ENCODE measurements at regions of chr9 and their contacts with region 1.

Region 1: GRCh38 chr9:113657703-113658544 is 194.4 kb downstream of the RGS3 start:
- DNase-seq: peak; percentile 94
- H3K4me3 Mint-ChIP-seq: no peak overlapping the region
- H3K27ac Mint-ChIP-seq: no peak overlapping the region
- H3K4me1 Mint-ChIP-seq: peaks cover 9% of the 10 kb centered on the region
- H3K27me3 Mint-ChIP-seq: peaks cover 22% of the 10 kb centered on the region

Region 2: DNA sequence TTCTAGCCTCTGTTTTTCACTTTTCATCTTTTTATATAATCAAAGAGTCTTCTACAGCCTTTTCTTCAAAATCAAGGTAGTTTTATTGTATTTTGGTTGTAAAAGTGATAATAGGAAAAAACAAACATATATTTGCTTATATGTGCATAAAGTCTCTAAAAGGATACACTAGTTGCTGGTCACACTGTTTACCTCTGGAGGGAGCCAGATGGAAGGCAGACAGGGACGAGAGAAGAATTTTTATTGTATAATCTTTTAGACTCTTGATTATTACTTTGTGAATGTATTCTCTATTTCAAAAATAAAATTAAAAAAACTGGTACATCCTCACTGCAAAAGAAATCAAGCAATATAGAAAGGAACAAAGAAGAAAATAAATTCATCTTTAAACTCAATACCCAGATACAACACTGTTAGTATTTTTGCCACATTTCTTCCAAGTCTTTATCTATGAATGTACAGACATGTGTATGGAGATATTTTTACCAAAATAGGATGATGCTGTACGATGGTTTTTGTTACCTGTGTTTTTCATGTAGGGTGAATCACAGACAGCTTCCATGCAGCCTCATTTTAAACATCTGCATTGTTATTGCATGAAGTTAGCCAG is 348.6 kb before region 1 on chr9:
- intact Hi-C with region 1: loop called (anchors 1 kb)
- DNase-seq: peak; percentile 79
- H3K4me3 Mint-ChIP-seq: no peak overlapping the region
- H3K27ac Mint-ChIP-seq: no peak overlapping the region
- H3K4me1 Mint-ChIP-seq: peaks cover 2% of the 10 kb centered on the region
- H3K27me3 Mint-ChIP-seq: peaks cover 3% of the 10 kb centered on the region

Region 3: DNA sequence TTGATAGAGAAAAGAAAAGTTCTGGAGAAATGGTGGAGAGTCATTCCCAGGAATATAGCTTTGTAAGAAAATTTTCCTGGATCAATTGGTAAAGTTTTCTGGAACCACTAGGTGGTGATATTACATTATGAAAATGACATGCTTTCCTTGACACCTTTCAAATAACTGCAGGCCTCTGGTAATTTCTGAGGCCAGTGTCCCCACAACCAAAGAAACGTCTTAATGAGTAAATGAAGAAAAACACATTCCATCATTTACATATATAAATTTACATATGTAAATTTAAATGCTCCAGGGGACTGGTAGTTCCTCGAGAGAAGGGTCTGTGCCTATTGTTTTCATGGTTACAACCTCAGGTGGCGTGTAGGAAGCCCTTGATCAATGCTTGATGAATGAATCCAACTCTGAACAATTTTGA is 211.6 kb before region 1 on chr9:
- intact Hi-C with region 1: loop called (anchors 1 kb)
- DNase-seq: peak; percentile 70
- H3K4me3 Mint-ChIP-seq: no peak overlapping the region
- H3K27ac Mint-ChIP-seq: no peak overlapping the region
- H3K4me1 Mint-ChIP-seq: peaks cover 2% of the 10 kb centered on the region
- H3K27me3 Mint-ChIP-seq: no peaks in the 10 kb centered on the region

Region 4: DNA sequence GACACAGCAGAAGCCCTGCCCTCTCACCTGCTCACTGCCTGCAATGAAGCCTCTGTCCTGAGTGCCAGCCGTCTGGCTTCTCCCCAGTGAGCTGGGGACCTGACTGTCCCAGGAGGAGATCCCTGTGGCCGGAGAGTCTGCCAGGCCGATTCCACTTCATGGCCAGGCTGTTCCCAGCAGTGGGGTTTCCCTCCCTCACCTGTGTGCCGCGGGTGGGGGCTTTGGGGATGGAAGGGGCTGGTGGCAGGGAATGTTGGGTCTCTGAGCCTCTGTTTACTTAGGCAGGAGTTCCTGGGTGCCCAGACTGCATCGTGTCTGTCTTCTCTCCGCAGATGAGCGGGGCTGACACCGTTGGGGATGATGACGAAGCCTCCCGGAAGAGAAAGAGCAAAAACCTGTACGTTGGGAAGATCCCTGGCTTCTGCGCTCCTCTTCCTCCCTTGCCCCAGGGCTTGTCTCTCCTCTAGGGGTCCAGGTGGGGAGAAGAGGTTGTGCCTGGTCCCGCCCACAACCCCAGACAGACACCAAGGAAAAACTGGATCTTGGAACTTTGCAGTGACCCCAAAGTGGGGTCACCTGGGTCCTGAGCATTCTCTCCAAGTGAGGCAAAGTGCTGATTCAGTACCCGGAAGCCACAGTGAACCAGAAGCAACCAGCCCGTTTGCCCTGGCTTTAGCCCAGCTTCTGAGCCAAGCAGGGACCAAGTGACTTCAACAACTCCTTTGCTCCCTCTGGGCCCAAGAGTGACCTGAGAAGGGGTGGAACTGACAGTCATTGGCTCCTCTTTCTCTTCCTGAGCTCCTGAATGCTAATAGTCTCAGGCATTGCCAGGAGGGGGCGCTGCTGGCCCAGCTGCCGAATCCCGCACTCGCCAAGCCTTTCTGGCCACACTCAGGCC is 66.7 kb before region 1 on chr9:
- intact Hi-C with region 1: loop called (anchors 1 kb)
- DNase-seq: peak; percentile 89
- H3K4me3 Mint-ChIP-seq: no peak overlapping the region
- H3K27ac Mint-ChIP-seq: peak overlapping the region; percentile 34
- H3K4me1 Mint-ChIP-seq: peaks cover 42% of the 10 kb centered on the region
- H3K27me3 Mint-ChIP-seq: no peaks in the 10 kb centered on the region

Region 5: GRCh38 chr9:113622600-113623400 is 35.1 kb before region 1 on chr9:
- intact Hi-C with region 1: loop called (anchors 2 kb)
- DNase-seq: peak; percentile 78
- H3K4me3 Mint-ChIP-seq: peak overlapping the region; percentile 52
- H3K27ac Mint-ChIP-seq: peak overlapping the region; percentile 96
- H3K4me1 Mint-ChIP-seq: peaks cover 44% of the 10 kb centered on the region
- H3K27me3 Mint-ChIP-seq: no peaks in the 10 kb centered on the region

Region 6: DNA sequence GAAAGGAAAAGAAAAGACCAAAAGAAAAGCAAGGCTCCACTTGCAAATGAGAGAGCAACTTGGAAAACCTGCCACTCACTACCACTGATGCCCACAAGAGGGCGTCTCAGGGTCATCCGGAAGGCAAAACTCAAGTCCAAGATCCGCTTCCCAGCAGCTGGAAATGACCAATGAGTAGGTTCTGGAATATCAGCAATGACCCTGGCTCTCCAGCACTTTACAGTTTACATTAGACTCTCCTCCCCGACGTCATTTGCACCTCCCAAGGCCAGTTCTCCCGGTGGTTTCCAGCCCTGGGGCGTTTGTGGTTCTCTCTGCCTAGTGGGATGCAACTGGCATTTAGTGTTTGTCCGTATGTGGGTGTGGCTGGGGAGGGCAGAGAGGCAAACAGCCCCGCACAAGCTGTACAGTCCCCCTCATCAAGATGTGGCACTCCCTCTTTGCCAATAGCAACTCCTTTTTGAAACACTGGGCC is 24.4 kb after region 1 on chr9:
- intact Hi-C with region 1: no loop called
- DNase-seq: peak; percentile 80
- H3K4me3 Mint-ChIP-seq: no peak overlapping the region
- H3K27ac Mint-ChIP-seq: no peak overlapping the region
- H3K4me1 Mint-ChIP-seq: peaks cover 3% of the 10 kb centered on the region
- H3K27me3 Mint-ChIP-seq: peaks cover 50% of the 10 kb centered on the region